ENCODE measurements at regions of chr5 and their contacts with region 1.

Region 1: DNA sequence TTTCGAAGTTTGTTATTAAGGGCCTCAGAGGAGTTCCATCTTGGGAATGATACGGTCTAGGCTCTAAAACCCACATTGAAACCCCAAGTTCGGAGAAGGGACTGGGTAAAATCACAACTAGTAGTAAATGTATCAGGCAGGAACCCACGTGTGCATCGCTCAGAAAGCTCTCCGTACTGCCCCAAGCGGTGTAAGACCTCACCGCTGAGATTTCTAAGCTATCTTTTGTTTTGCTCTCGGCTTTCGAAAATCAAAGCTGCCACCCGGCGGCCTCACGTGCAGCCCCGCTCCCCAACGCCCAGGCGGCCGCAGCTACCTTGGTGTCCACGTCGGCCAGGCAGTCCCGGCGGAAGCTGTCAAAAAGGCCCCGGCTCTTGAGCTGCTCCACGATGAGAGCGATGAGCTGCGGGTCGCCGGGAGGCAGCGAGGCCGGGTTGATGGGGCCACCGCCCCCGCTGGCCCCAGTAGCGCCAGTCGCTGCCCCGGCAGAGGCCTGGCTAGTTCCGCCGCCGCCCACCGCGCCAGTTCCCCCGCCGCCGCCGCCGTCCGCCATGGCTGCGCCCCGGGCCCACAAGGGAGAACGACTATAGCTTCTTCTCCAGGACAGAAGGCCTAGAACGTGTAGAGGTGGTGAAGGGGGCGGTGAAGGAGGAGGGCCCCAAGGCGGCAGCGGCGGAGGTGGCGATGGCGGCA is 420 bp downstream of the BOD1 start:
- DNase-seq: peak; percentile 67 to 72
- H3K4me3 ChIP-seq: peak overlapping the region; percentile 98
- H3K27ac ChIP-seq: peak overlapping the region; percentile 84
- H3K4me1 ChIP-seq: peaks cover 31% of the 10 kb centered on the region
- H3K27me3 ChIP-seq: no peaks in the 10 kb centered on the region
- CTCF ChIP-seq: peak; percentile 70

Region 2: DNA sequence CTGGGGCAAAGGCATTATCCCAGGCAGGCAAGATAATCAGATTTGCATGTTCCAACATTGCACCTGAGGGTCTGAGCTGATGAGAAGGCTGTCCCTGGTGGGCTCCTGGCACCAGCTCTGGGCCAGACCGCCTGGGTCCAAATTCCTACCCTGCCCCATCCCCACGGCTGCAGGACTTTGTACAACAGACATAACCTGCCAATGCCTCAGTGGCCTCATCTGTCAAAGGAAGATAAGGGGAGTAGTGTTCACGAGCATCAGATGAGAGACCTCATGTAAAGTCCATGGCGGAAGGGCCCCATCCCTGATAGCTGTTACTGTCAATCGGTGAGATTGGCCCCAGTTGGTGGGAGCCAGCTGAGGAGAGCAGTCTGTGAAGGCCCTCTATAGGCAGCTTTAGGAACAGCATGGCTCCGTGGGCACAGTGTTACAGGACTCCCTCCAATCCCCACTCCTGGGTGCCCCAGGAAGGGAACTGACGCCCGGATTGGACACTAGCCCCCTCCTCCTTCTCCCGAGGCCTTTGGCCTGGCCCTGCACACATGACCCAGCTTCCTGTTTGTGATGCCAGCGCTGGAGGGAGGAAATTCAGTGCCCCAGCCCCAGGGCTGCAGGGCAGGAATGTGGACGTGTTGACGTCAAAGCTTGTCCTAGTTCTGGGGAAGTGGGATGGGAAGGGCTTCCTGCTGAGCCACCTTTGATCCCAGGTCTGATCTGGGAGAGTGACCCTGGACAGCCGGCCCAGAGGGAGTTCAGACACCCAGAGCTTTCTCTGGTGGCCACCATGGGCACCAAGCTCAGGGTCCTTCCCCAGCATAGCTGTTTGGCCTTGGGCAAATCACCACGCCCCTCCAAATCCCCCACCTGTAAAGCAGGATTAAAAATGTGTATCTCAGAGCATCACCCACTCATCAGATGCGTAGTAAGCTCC is 901.3 kb before region 1 on chr5:
- CTCF ChIA-PET with region 1: no interaction called
- POLR2A ChIA-PET with region 1: no interaction called
- intact Hi-C with region 1: loop called (anchors 2 kb)
- DNase-seq: peak; percentile 74 to 80
- H3K4me3 ChIP-seq: no peak overlapping the region
- H3K27ac ChIP-seq: 0 out of 2 replicates have a peak overlapping the region, but pooled peaks have one; percentile 18
- H3K4me1 ChIP-seq: peaks cover 14% of the 10 kb centered on the region
- H3K27me3 ChIP-seq: no peaks in the 10 kb centered on the region
- CTCF ChIP-seq: peak; percentile 88

Region 3: GRCh38 chr5:173293817-173294672 is 322.0 kb before region 1 on chr5:
- CTCF ChIA-PET with region 1: interaction called, 3 read pairs
- POLR2A ChIA-PET with region 1: no interaction called
- intact Hi-C with region 1: loop called (anchors 1 kb)
- DNase-seq: peak; percentile 71 to 83
- H3K4me3 ChIP-seq: peak overlapping the region; percentile 45; the same call in 1 of the 2 replicates
- H3K27ac ChIP-seq: peak overlapping the region; percentile 28
- H3K4me1 ChIP-seq: peaks cover 26% of the 10 kb centered on the region
- H3K27me3 ChIP-seq: no peaks in the 10 kb centered on the region
- CTCF ChIP-seq: peak; percentile 92

Region 4: DNA sequence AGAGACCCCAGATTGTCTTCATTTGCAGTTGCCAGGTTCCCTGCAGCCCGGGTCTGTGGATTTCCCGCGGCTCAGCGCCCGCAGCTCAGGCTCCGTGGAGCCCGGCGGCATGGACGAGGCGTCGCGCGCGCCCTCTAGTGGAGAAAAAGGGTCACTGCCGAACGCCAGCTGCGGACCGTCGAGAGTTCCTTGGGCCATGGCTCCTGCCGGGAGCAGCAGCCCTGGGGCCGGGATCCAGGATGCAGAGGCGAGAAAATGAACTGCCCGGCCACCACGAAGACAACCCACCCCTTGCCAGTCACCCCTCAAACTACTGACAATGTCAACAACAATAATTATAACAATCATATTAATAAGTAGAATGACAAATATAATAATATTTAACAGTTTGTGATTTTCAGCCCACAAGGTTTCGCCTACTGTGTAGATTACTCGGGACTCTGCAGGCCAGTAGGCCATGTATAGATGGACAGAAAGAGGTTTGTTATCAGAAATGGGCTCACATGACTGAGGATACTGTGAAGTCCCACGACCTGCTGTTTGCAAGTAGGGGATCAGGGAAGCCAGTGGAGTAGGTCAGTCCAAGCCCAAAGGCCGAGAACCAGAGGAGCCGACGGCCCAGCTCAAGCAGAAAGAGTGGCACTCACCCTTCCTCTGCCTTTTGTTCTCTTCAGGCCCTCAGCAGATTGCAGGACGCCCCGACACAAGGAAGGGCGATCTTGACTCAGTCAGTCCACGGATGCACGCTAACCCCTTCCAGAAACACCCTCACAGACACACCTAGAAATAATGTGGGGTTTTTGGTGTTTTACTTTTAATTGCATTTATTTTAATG is 42.7 kb before region 1 on chr5:
- CTCF ChIA-PET with region 1: no interaction called
- POLR2A ChIA-PET with region 1: no interaction called
- intact Hi-C with region 1: no loop called
- DNase-seq: peak; percentile 43 to 77
- H3K4me3 ChIP-seq: peak overlapping the region; percentile 36; the same call in 1 of the 2 replicates
- H3K27ac ChIP-seq: no peak overlapping the region
- H3K4me1 ChIP-seq: peaks cover 14% of the 10 kb centered on the region
- H3K27me3 ChIP-seq: no peaks in the 10 kb centered on the region
- CTCF ChIP-seq: peak; percentile 94

Region 5: DNA sequence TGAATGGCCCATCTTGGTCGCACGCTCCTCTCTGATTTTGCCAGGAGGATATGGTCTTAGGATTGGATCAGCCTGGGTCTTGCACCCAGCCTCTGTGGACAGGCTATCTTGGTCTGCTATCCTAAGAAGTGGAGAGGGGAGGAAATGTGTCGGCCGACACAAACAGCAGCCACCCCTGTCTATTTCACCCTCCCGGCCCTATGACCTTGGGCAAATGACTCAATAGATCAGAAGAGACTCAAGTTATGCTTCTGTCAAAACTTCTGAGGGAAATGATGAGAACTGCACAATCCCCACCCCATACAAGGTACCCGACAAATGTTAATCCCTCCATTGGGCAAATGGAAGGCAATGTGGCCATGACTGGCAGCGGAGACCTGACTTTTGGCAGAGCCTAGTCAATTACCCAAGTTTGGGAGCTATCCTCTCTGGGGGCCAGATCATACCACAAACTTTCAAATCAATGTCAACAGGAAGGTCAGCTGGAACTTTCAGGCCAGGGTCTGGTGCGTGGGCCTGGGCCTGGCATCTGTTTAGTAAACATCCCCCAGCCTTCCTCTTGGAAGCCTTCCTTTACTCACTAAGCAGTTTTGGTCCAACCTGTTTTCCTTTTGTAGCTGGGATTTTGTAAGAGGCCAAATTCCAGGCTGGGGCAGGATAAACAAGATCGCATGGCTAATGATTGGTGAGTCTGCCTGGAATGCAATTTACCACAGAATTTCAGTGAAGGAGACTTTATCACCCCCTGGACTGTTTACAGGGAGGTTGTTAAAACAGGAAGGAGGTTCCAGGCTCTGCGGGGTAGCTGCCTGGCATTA is 207.9 kb after region 1 on chr5:
- CTCF ChIA-PET with region 1: no interaction called
- POLR2A ChIA-PET with region 1: no interaction called
- intact Hi-C with region 1: loop called (anchors 1 kb)
- DNase-seq: peak; percentile 82 to 98
- H3K4me3 ChIP-seq: peak overlapping the region; percentile 25; the same call in 1 of the 2 replicates
- H3K27ac ChIP-seq: peak overlapping the region; percentile 77
- H3K4me1 ChIP-seq: peaks cover 58% of the 10 kb centered on the region
- H3K27me3 ChIP-seq: no peaks in the 10 kb centered on the region
- CTCF ChIP-seq: no peak

Region 6: DNA sequence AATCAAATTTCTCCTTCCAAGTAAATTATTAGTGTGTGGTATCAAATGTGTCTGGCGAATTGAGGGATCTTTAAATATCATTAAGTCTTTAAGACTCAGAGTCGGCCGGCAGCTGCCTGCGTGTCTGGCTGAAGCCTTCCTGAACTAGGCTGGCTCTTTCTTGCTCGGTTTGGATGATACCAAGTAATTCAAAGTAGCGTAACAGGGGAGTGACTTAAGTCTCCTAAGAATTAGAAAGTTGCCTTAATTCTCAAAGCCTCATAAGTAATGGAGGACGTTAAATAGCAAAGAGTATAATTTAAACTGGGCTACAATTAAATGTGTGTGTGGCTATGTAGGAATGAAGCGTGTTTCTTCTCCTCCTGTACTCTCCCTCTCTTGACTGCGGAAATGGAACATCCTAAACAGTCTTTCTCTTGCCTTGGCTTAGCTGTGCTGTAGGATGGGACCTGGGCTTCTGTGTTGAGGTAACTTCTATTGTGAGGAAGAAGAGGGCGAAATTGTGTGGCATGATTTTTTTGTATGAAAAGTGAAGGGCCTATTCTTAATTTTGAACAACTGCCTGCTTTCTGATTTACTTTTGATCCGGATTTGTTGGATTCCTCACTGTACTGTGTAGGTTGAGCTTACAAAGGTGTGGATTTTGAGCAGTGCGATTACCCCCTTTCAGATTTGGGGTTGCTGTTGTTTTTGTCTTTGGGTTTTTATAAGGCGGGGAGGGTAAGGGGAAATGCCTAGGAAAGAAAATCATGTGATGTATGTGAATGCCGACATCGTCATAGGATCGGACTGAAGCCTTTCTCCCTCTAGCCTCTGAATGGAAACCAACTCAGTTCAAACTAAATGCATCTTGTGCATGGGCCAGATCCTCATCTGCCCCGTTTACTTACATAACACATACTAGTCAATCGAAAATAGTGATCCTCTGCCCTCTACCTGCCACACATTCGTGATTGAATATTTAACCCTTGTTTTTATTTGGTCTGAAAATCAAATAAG is 302.1 kb after region 1 on chr5:
- CTCF ChIA-PET with region 1: no interaction called
- POLR2A ChIA-PET with region 1: no interaction called
- intact Hi-C with region 1: loop called (anchors 1 kb)
- DNase-seq: peak; percentile 53 to 76
- H3K4me3 ChIP-seq: peak overlapping the region; percentile 79
- H3K27ac ChIP-seq: peak overlapping the region; percentile 86
- H3K4me1 ChIP-seq: peaks cover 29% of the 10 kb centered on the region
- H3K27me3 ChIP-seq: no peaks in the 10 kb centered on the region
- CTCF ChIP-seq: peak; percentile 43; the same call in 1 of the 2 replicates

Region 7: GRCh38 chr5:173984218-173984617 is 368.2 kb after region 1 on chr5:
- CTCF ChIA-PET with region 1: interaction called, 5 read pairs
- POLR2A ChIA-PET with region 1: no interaction called
- intact Hi-C with region 1: loop called (anchors 1 kb)
- DNase-seq: peak in 1 of 2 experiments; percentile 53
- H3K4me3 ChIP-seq: no peak overlapping the region
- H3K27ac ChIP-seq: no peak overlapping the region
- H3K4me1 ChIP-seq: no peaks in the 10 kb centered on the region
- H3K27me3 ChIP-seq: no peaks in the 10 kb centered on the region
- CTCF ChIP-seq: peak; percentile 68